Naive thymus-derived CD4-positive, alpha-beta T cell (primary cell): ENCODE measurements at regions of chr7 and their contacts with region 1.

Region 1: DNA sequence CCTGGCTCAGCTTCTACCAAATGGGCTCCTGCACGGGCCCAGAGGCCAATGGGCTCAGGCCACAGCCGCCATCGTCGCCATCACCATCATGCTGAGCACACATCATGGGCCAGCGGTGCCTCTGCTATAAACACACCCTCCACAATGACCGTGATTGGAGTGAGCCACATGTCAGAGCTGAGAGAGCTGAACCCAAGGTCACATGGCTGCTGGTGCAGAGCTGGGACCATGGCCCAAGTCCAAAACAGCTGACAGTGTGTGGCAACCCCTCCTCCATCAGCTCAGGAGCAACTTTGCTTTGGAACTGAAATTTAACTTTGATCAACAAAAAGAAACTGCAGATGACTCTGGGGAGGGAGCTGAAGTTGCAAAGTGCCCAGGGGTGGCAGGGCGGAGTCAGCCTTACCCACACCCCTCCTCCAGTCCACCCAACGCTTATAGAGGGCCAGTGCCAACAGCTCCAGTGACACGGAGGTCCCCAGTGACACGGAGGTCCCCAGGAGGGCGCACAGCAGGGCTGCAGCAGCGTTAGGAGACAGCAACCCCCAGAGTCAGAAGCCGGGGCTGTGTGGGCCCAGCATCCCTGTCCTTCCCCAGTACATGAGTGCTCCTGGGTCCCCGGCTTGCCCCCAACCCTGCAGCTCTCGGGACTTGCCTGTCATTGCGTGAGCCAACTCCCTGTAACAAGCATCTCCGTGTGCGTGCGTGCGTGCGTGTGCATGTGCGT is 249.6 kb downstream of the ELFN1 start:
- DNase-seq: peak in 1 of 9 donors; percentile 46
- ATAC-seq: peak; percentile 21
- H3K4me3 ChIP-seq: peak overlapping the region; percentile 47
- H3K4me3 Mint-ChIP-seq: peak overlapping the region; percentile 79 to 97 (median 87)
- H3K27ac ChIP-seq: peak overlapping the region; percentile 47
- H3K27ac Mint-ChIP-seq: peak overlapping the region; percentile 51 to 97 (median 84)
- H3K4me1 ChIP-seq: peaks cover 21 to 69% of the 10 kb centered on the region in 2 donors
- H3K4me1 Mint-ChIP-seq: peaks cover 48 to 83% (median 59%) of the 10 kb centered on the region in 7 donors
- H3K27me3 ChIP-seq: no peaks in the 10 kb centered on the region
- H3K27me3 Mint-ChIP-seq: peaks cover 0 to 15% (median 0%) of the 10 kb centered on the region in 5 donors

Region 2: GRCh38 chr7:1664711-1665548 is 254.8 kb before region 1 on chr7:
- CTCF ChIA-PET with region 1: no interaction called
- POLR2A ChIA-PET with region 1: no interaction called
- intact Hi-C with region 1: loop called (anchors 10 kb)
- DNase-seq: peak in 7 of 9 donors; percentile 14 to 56 (median 50)
- ATAC-seq: peak; percentile 48
- H3K4me3 ChIP-seq: peak overlapping the region; percentile 17
- H3K4me3 Mint-ChIP-seq: peak overlapping the region in 4 of 10 donors; percentile 10 to 90 (median 40)
- H3K27ac ChIP-seq: no peak overlapping the region
- H3K27ac Mint-ChIP-seq: no peak overlapping the region
- H3K4me1 ChIP-seq: no peaks in the 10 kb centered on the region
- H3K4me1 Mint-ChIP-seq: peaks cover 5 to 14% (median 7%) of the 10 kb centered on the region in 7 donors
- H3K27me3 ChIP-seq: peaks cover 0 to 10% of the 10 kb centered on the region in 2 donors
- H3K27me3 Mint-ChIP-seq: peaks cover 34 to 50% (median 38%) of the 10 kb centered on the region in 5 donors

Region 3: DNA sequence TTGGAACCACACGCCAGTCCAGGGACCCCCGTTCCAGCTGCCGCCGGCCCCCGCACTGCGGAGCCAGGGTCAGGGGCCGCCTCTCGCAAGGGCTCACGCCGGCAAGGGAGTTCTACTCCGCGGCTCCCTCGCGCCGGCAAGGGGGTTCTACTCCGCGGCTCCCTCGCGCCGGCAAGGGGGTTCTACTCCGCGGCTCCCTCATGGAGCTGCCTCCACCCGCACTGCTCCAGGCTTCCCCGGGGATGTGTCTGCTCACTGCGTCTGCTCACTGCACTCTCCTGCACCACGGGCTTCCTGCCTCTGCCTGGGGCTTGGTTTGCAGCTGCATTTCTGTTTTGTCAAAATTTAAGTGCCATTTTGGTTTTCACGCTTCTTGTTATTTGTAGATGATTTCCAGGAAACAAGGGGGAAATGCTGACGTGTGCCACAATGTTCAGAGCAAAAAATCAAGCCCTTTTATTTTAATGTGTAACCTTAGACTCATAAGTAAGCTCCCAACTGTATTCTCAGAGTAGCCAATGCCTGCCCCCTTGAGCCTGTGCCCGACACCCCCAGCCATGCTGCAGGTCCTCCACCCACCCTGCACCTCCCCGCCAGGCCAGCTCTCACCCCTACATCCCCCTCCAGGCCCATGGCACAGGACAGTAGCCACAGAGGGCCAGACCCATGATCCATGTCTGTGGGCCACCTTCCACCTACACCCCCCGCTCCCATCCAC is 66.8 kb after region 1 on chr7:
- CTCF ChIA-PET with region 1: no interaction called
- POLR2A ChIA-PET with region 1: no interaction called
- intact Hi-C with region 1: loop called in 1 of 2 experiments (anchors 5 kb)
- DNase-seq: peak in 7 of 9 donors; percentile 17 to 83 (median 69)
- ATAC-seq: peak; percentile 71
- H3K4me3 ChIP-seq: no peak overlapping the region
- H3K4me3 Mint-ChIP-seq: peak overlapping the region; percentile 26 to 83 (median 71)
- H3K27ac ChIP-seq: peak overlapping the region; percentile 66
- H3K27ac Mint-ChIP-seq: peak overlapping the region; percentile 90 to 99 (median 95)
- H3K4me1 ChIP-seq: peaks cover 25 to 33% of the 10 kb centered on the region in 2 donors
- H3K4me1 Mint-ChIP-seq: peaks cover 13 to 47% (median 38%) of the 10 kb centered on the region in 7 donors
- H3K27me3 ChIP-seq: no peaks in the 10 kb centered on the region
- H3K27me3 Mint-ChIP-seq: no peaks in the 10 kb centered on the region

Region 4: DNA sequence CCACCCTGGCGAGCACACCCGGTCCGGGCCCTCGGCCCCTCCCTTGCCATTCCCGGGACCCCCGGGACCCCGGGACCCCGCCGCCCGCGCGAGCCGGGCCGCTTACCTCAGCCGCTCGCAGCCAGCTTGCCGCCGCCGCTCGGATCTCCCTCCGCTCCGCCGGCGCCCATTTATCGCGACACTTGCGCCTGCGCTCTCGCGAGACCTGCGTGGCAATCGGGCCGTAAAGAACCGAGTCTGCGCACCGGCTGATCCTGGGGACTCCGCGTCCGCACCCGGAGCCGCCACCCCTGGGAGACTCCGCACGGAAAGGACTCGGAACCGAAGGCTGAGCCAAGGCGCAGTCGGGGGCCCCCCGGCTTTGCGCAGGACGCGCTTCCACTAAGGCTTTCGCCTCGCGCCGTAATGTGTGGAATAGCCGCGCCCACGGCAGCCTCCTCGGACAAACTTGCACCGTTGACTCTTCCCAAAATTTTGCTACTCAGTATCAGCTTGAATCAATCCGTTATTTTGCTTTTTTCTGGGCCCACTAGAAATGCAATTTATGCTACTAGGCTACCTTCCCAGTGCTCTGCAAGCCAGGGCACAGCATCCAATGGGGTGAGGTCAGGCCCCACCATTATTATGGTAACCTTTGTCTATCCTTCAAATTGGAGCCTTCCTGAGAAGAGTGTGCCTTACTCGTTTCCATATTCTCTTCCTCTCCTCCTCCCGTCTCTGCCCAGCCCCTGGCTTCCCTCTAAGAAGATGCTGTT is 313.2 kb after region 1 on chr7 and contains the start of gene MAD1L1:
- CTCF ChIA-PET with region 1: no interaction called
- POLR2A ChIA-PET with region 1: no interaction called
- intact Hi-C with region 1: loop called in 1 of 2 experiments (anchors 10 kb)
- DNase-seq: peak; percentile 75 to 90 (median 88)
- ATAC-seq: peak; percentile 90
- H3K4me3 ChIP-seq: peak within 1 kb of the TSS; percentile 99
- H3K4me3 Mint-ChIP-seq: peak within 1 kb of the TSS; percentile 88 to 98 (median 95)
- H3K27ac ChIP-seq: peak within 1 kb of the TSS; percentile 80
- H3K27ac Mint-ChIP-seq: peak within 1 kb of the TSS; percentile 66 to 91 (median 86)
- H3K4me1 ChIP-seq: peaks cover 13 to 27% of the 10 kb centered on the region in 2 donors
- H3K4me1 Mint-ChIP-seq: peaks cover 16 to 58% (median 31%) of the 10 kb centered on the region in 7 donors
- H3K27me3 ChIP-seq: no peaks in the 10 kb centered on the region
- H3K27me3 Mint-ChIP-seq: no peaks in the 10 kb centered on the region
- total RNA-seq, gene MAD1L1: 112 to 141 (median 125) TPM